ENCODE measurements at regions of chr3 and their contacts with region 1.

Region 1: GRCh38 chr3:69181592-69182211 is 59.3 kb upstream of the LMOD3 start:
- DNase-seq: peak; percentile 6
- H3K4me3 ChIP-seq: no peak overlapping the region
- H3K27me3 ChIP-seq: no peaks in the 10 kb centered on the region
- CTCF ChIP-seq: no peak

Region 2: GRCh38 chr3:69240651-69241568 is 59.2 kb after region 1 on chr3:
- CTCF ChIA-PET with region 1: no interaction called
- POLR2A ChIA-PET with region 1: no interaction called
- DNase-seq: no peak
- H3K4me3 ChIP-seq: no peak overlapping the region
- H3K27me3 ChIP-seq: peaks cover 3% of the 10 kb centered on the region; the same call in 1 of the 2 replicates
- CTCF ChIP-seq: no peak

Region 3: DNA sequence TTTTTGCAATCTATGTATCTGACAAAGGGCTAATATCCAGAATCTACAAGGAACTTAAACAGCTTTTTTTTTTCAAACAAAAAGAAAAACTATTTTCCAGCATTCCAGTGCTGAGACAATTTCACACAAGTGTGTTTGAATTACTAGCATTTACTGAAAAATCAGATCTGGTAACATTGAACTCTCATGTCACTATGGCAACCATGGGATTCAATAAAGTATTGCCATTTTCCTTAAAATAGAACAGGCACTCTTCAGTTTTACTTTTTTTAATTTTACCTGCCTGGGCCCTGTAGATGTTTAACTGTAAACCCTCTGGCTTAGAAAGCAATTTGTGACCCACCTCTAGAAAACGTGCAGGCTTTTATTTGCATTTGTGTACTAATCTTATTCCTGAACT is 663.0 kb after region 1 on chr3:
- CTCF ChIA-PET with region 1: no interaction called
- POLR2A ChIA-PET with region 1: interaction called, 18 read pairs
- DNase-seq: no peak
- H3K4me3 ChIP-seq: no peak overlapping the region
- H3K27me3 ChIP-seq: no peaks in the 10 kb centered on the region
- CTCF ChIP-seq: no peak